PC-9 (cell line): ENCODE measurements at regions of chr5 and their contacts with region 1.

Region 1: DNA sequence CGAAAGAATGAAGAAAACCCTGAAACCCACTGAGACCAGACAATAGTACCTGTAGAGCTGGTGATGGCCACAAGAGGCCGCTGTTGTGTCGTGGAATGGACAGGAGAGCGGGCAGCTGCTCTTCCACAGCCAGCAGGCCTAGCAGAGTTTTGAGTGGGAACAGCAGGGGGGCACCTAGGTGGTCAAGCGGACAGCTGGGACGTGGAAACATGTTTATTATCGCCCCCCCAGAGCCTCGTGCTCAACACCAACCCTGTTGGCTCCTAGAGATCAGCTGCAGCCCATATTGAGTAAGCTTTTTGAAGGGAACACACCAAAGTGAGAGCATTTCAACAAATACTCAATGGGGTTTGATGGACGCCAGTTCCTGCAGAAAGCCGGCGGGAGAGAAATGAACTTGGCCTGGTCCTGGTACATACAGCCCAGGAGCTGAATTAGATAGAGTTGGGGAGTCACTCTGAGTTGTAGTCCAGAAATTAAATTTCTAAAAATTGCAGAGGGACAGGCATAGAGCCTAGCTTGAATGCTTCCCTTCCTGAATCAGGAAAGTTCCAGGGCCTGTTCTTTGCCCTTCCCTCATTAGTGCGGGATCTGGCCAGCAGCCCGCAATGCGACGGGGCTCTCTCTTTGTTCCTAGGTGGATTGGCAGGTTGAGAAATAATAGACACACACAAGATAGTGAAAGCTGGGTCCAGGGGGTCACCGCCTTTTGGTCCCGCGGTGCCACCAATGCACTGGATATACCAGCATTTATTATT is 33.8 kb downstream of the MFAP3 start:
- DNase-seq: peak; percentile 44 to 81
- H3K4me3 ChIP-seq: no peak overlapping the region
- H3K27ac ChIP-seq: no peak overlapping the region
- H3K4me1 ChIP-seq: peaks cover 25% of the 10 kb centered on the region
- H3K27me3 ChIP-seq: no peaks in the 10 kb centered on the region
- CTCF ChIP-seq: peak; percentile 99

Region 2: GRCh38 chr5:153018121-153018520 is 1054.5 kb before region 1 on chr5:
- CTCF ChIA-PET with region 1: no interaction called
- POLR2A ChIA-PET with region 1: no interaction called
- intact Hi-C with region 1: no loop called
- DNase-seq: no peak
- H3K4me3 ChIP-seq: no peak overlapping the region
- H3K27ac ChIP-seq: no peak overlapping the region
- H3K4me1 ChIP-seq: no peaks in the 10 kb centered on the region
- H3K27me3 ChIP-seq: no peaks in the 10 kb centered on the region
- CTCF ChIP-seq: no peak

Region 3: GRCh38 chr5:153974131-153974812 is 98.3 kb before region 1 on chr5:
- CTCF ChIA-PET with region 1: interaction called, 6 read pairs
- POLR2A ChIA-PET with region 1: no interaction called
- intact Hi-C with region 1: loop called (anchors 5 kb)
- DNase-seq: peak in 1 of 2 experiments; percentile 42
- H3K4me3 ChIP-seq: no peak overlapping the region
- H3K27ac ChIP-seq: no peak overlapping the region
- H3K4me1 ChIP-seq: no peaks in the 10 kb centered on the region
- H3K27me3 ChIP-seq: peaks cover 24% of the 10 kb centered on the region; the same call in 1 of the 2 replicates
- CTCF ChIP-seq: peak; percentile 85

Region 4: DNA sequence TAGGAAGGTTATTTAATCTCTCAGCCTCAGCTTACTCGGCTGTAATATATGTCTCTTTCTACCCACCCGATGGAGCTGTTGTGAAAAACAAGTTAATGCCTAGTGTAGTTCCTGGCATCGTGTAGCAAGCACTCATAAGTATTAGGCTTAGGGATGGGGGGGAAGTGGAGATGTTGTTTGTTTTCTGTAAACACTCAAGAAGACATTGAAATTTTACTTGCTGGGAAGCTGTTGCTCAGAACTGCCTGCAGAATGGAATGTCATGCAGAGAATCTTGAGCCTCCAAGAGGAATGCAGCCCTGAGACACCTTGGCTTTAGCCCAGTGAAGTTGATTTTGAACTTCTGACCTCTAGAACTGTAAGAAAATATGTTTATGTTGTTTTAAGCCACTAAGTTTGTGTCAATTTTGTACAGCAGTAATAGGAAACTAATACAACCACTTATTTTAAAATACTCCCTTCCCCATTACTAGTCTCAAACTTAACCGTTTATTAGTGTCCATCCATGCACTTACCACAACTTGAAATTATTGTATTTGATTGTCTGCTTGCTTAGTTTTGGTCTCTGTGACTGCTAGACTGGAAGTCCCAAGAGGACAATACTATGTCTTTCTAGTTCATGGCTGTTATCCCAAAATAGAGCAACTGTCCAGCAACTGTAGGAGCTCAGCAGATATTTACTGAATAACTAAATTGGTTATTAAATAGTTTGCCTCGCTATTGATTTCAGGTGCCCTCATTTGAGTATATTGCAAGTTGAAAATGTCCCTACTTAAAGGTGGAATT is 20.0 kb after region 1 on chr5:
- CTCF ChIA-PET with region 1: interaction called, 8 read pairs
- POLR2A ChIA-PET with region 1: no interaction called
- intact Hi-C with region 1: loop called (anchors 1 kb)
- DNase-seq: peak; percentile 56 to 83
- H3K4me3 ChIP-seq: no peak overlapping the region
- H3K27ac ChIP-seq: peak overlapping the region; percentile 33; the same call in 1 of the 2 replicates
- H3K4me1 ChIP-seq: peaks cover 37% of the 10 kb centered on the region
- H3K27me3 ChIP-seq: no peaks in the 10 kb centered on the region
- CTCF ChIP-seq: no peak

Region 5: GRCh38 chr5:154189819-154190594 is 117.4 kb after region 1 on chr5:
- CTCF ChIA-PET with region 1: interaction called, 13 read pairs
- POLR2A ChIA-PET with region 1: no interaction called
- intact Hi-C with region 1: no loop called
- DNase-seq: peak; percentile 60 to 86
- H3K4me3 ChIP-seq: peak overlapping the region; percentile 73
- H3K27ac ChIP-seq: peak overlapping the region; percentile 56; the same call in 1 of the 2 replicates
- H3K4me1 ChIP-seq: peaks cover 44% of the 10 kb centered on the region
- H3K27me3 ChIP-seq: no peaks in the 10 kb centered on the region
- CTCF ChIP-seq: peak; percentile 54; the same call in 1 of the 2 replicates

Region 6: DNA sequence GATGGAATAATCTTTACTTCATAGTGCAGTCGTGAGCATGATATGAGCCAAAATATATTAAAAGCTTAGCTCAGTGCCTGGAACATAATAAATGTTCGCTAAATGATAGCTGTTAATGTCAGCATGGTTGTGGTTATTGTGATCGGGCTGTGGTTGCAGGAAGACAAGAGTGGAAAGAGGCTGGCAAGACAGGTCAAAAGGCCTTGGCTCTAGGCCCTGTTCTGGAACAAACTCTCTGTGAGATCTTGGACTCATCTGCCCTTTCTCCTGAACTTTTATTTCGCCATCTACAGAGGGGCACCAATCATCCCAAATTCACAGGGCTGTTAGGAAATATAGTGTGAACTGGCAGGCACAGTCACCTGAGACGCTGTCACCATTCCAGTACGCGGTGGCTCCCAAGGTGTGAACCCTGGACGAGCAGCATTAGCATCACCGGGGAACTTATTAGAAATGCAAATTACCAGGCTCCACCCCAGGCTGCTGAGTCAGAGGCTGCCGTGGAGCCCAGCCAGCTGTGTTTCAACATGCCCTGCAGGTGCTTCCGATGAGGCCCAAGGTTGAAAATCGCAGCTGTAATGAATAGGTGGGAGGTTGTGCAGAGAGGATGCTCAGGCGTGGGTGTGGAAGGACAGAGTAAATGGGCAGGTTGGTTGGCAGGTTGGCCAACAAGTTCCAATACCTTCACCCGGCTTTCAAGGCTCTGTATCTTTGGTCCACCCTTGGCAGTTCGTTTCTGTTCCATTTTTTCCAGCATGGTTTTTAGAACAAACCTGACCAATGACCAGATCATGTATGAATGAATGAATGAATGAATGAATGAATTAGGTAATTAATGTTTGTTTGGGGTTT is 323.0 kb after region 1 on chr5:
- CTCF ChIA-PET with region 1: interaction called, 5 read pairs
- POLR2A ChIA-PET with region 1: no interaction called
- intact Hi-C with region 1: loop called (anchors 1 kb)
- DNase-seq: peak; percentile 83 to 90
- H3K4me3 ChIP-seq: no peak overlapping the region
- H3K27ac ChIP-seq: peak overlapping the region; percentile 85
- H3K4me1 ChIP-seq: peaks cover 34% of the 10 kb centered on the region
- H3K27me3 ChIP-seq: no peaks in the 10 kb centered on the region
- CTCF ChIP-seq: no peak

Region 7: GRCh38 chr5:154461531-154461930 is 388.9 kb after region 1 on chr5:
- CTCF ChIA-PET with region 1: interaction called, 4 read pairs
- POLR2A ChIA-PET with region 1: no interaction called
- intact Hi-C with region 1: loop called (anchors 5 kb)
- DNase-seq: peak in 1 of 2 experiments; percentile 15
- H3K4me3 ChIP-seq: no peak overlapping the region
- H3K27ac ChIP-seq: no peak overlapping the region
- H3K4me1 ChIP-seq: peaks cover 15% of the 10 kb centered on the region
- H3K27me3 ChIP-seq: no peaks in the 10 kb centered on the region
- CTCF ChIP-seq: peak; percentile 40; the same call in 1 of the 2 replicates